PC-3 (cell line): ENCODE measurements at regions of chr12 and their contacts with region 1.

Region 1: GRCh38 chr12:89461649-89462612 is 62.7 kb downstream of the GALNT4 start:
- DNase-seq: peak; percentile 82
- ATAC-seq: peak; percentile 85
- H3K4me3 ChIP-seq: peak overlapping the region; percentile 19; the same call in 1 of the 2 replicates
- H3K27ac ChIP-seq: 0 out of 2 replicates have a peak overlapping the region, but pooled peaks have one; percentile 5
- H3K4me1 ChIP-seq: peaks cover 24% of the 10 kb centered on the region
- H3K27me3 ChIP-seq: no peaks in the 10 kb centered on the region
- CTCF ChIP-seq: peak; percentile 76

Region 2: DNA sequence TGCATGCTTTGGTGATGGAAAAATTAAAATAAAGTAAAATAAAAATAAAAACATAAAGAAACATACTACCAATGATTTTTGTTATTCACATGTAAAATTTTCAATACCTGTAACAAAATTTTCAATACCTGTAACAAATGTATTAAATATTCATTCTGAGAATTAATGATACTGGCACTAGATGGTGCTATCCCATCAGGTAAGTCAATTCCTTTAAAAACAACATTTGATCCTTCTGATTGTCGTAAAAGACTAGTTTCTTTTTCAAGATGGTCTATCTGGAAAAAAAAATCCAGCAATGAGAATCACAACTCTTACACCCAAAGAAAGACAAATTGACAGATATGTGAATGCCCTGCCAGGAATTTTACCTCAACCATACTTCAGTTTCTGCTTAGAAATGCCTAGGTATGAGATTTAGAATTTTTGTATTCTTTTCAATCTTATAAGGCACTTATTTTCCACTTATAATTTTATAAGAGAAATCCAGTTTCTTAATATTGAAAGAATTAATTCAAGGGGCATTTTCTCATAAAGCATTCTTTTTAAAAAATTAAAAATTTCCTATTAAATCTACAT is 1350.8 kb before region 1 on chr12:
- CTCF ChIA-PET with region 1: no interaction called
- POLR2A ChIA-PET with region 1: no interaction called
- intact Hi-C with region 1: loop called (anchors 10 kb)
- DNase-seq: peak; percentile 76
- ATAC-seq: no peak
- H3K4me3 ChIP-seq: peak overlapping the region; percentile 61; the same call in 1 of the 2 replicates
- H3K27ac ChIP-seq: no peak overlapping the region
- H3K4me1 ChIP-seq: peaks cover 5% of the 10 kb centered on the region; the same call in 1 of the 2 replicates
- H3K27me3 ChIP-seq: no peaks in the 10 kb centered on the region
- CTCF ChIP-seq: peak; percentile 75

Region 3: DNA sequence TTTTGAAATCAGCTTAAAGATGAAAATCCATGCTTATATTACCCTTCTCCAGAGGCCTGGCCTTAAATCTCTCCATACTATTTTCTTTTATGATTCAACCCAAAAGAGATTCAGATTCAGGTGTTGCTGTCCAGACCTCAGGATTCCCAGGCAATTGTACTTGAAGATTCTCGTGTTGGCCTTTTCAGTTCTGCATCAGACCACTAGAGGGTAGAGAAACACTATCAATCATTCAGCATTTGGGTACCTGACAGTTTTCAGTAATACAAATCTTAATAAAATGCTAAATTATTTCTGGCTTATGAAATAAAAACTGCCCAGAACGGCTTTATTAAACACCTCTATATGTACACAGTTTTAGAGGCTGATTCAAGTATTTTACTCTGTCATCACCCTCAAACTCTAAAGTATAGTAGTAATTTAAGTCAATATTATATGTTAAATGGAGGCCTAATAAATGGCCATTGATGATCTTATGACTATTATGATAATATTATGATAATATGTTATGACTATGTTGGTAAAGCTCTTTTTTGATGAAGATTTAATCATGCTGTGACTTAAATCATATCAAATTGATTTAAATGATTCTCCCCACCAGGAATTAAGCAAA is 410.8 kb before region 1 on chr12:
- CTCF ChIA-PET with region 1: no interaction called
- POLR2A ChIA-PET with region 1: no interaction called
- intact Hi-C with region 1: loop called (anchors 1 kb)
- DNase-seq: peak; percentile 86
- ATAC-seq: peak; percentile 73
- H3K4me3 ChIP-seq: no peak overlapping the region
- H3K27ac ChIP-seq: no peak overlapping the region
- H3K4me1 ChIP-seq: 0 out of 2 replicates have a peak, but pooled peaks cover 5% of the 10 kb centered on the region
- H3K27me3 ChIP-seq: no peaks in the 10 kb centered on the region
- CTCF ChIP-seq: peak; percentile 96

Region 4: DNA sequence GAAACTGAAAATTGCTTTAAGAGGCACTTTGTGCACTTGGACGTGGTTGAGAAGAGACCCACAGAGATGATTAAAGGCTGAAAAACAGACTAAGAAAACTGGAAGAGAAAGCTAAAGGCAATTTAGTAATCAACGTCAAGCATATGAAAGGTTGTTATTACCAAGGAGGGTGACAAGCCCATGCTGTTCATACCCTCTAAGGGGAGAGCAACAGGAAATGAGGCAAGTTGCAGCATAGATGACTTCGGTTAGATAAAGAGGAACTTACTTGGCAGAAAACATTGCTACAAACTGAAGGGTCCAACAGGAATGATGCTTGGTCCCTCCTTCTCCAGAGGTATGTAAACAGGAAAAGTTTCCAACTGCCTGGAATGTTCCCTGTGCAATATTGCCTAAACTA is 217.4 kb before region 1 on chr12:
- CTCF ChIA-PET with region 1: no interaction called
- POLR2A ChIA-PET with region 1: no interaction called
- intact Hi-C with region 1: no loop called
- DNase-seq: no peak
- ATAC-seq: no peak
- H3K4me3 ChIP-seq: no peak overlapping the region
- H3K27ac ChIP-seq: no peak overlapping the region
- H3K4me1 ChIP-seq: peaks cover 13% of the 10 kb centered on the region
- H3K27me3 ChIP-seq: no peaks in the 10 kb centered on the region
- CTCF ChIP-seq: no peak

Region 5: DNA sequence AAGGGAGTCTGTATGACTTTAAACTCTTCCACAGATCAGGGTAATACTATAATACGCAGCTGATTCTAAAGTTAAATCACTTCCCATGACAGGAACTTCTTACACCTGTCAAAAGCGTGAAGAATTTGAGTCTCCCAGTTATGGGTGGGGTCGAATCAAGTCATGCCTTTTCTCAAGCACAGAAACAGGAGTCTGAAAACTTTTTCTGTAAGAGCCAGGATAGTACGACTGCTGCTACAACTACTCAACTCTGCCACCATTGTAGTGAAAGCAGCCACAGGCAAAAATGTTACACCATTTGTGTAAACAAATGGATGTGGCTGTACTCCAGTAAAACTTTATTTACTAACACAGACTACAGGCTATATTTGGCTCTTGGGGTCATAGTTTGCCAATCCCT is 199.9 kb before region 1 on chr12:
- CTCF ChIA-PET with region 1: interaction called, 6 read pairs
- POLR2A ChIA-PET with region 1: no interaction called
- intact Hi-C with region 1: loop called (anchors 10 kb)
- DNase-seq: peak; percentile 25
- ATAC-seq: no peak; the same call in 1 of the 2 replicates
- H3K4me3 ChIP-seq: no peak overlapping the region
- H3K27ac ChIP-seq: no peak overlapping the region
- H3K4me1 ChIP-seq: peaks cover 20% of the 10 kb centered on the region
- H3K27me3 ChIP-seq: no peaks in the 10 kb centered on the region
- CTCF ChIP-seq: no peak

Region 6: GRCh38 chr12:89373763-89374572 is 88.0 kb before region 1 on chr12:
- CTCF ChIA-PET with region 1: no interaction called
- POLR2A ChIA-PET with region 1: interaction called, 11 read pairs
- intact Hi-C with region 1: loop called (anchors 2 kb)
- DNase-seq: peak; percentile 76
- ATAC-seq: peak; percentile 45
- H3K4me3 ChIP-seq: no peak overlapping the region
- H3K27ac ChIP-seq: peak overlapping the region; percentile 92
- H3K4me1 ChIP-seq: peaks cover 77% of the 10 kb centered on the region
- H3K27me3 ChIP-seq: no peaks in the 10 kb centered on the region
- CTCF ChIP-seq: no peak